Activated T-helper 2 cell treated with anti-CD3 and anti-CD28 coated beads, Interferon-gamma antibody, Interleukin-2, Interleukin-4, amounts not matched to agents 10 μg/mL and 5 μg/mL and 100 μg/mL, durations not matched to agents 14 hours and 24 hours and 36 hours (primary cell): ENCODE measurements at regions of chr11 and their contacts with region 1.

Region 1: DNA sequence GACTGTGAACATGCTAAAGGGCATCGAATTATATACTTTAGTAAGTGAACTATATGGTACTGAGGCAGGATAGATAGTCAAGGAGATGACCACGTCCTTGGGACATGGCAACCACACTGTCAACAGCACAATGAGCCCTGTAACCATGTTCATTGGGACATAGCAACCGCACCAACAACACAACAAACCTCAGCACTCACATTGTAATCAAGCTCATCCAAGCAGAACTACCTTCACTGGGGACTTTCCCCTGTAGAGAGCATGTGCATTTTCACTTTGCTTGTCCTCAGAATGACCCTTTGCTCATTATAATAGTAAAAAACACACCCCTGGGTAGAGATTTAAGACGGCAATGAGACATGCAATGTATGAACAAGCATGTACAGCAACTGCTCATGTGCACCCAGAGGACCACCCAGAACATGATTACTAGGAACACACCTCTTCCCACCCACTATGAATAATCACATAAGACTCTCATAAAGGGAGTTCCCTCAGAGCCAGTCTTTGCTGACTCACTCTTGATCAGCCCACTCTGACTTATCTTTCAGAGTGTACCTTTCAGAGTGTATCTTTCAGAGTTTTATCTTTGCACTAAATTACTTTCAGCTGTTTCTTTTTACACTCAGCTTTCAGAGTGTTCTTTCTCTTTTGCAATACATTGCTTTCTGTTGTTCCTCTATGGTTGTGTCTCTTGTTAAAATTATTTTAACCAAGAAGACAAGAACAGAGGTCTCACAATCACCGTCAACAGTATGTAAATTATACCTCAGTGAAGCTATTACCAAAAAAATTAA is 4.1 kb upstream of the PLAAT2 start:
- DNase-seq: peak; percentile 70
- H3K4me3 Mint-ChIP-seq: no peak overlapping the region
- H3K27ac Mint-ChIP-seq: peak overlapping the region; percentile 94
- H3K4me1 Mint-ChIP-seq: peaks cover 44% of the 10 kb centered on the region
- H3K27me3 Mint-ChIP-seq: peaks cover 21% of the 10 kb centered on the region

Region 2: GRCh38 chr11:63445720-63446119 is 121.5 kb before region 1 on chr11:
- intact Hi-C with region 1: loop called (anchors 1 kb)
- DNase-seq: no peak
- H3K4me3 Mint-ChIP-seq: no peak overlapping the region
- H3K27ac Mint-ChIP-seq: peak overlapping the region; percentile 60
- H3K4me1 Mint-ChIP-seq: peaks cover 41% of the 10 kb centered on the region
- H3K27me3 Mint-ChIP-seq: peaks cover 7% of the 10 kb centered on the region

Region 3: GRCh38 chr11:63490551-63491239 is 76.5 kb before region 1 on chr11 and contains the start of gene PLAAT5:
- intact Hi-C with region 1: loop called (anchors 1 kb)
- DNase-seq: no peak
- H3K4me3 Mint-ChIP-seq: peak within 1 kb of the TSS; percentile 83
- H3K27ac Mint-ChIP-seq: peak within 1 kb of the TSS; percentile 78
- H3K4me1 Mint-ChIP-seq: peaks cover 28% of the 10 kb centered on the region
- H3K27me3 Mint-ChIP-seq: peaks cover 64% of the 10 kb centered on the region
- total RNA-seq, gene PLAAT5: 0.64 and 0.80 TPM in 2 replicates

Region 4: DNA sequence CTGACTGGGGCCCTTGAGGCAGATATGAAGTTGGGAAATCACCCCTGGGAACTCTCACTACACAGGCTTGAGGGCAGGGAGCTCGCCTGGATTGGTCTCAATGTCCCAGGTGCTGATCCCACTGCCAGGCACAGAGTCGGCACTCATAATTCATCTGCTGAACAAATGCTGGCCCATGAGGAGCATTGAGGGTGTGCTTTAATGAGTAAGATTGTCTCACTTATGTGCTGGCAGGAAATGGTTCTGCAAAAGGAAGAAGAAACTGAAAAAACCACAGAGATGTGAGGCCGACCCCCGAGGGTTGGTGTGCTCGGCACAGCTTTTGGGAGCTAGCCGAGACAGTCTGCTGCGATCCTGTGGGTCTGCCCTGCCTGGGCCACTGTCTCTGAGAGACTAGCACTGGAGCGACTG is 13.5 kb before region 1 on chr11:
- intact Hi-C with region 1: loop called (anchors 1 kb)
- DNase-seq: peak; percentile 39
- H3K4me3 Mint-ChIP-seq: peak overlapping the region; percentile 63
- H3K27ac Mint-ChIP-seq: peak overlapping the region; percentile 89
- H3K4me1 Mint-ChIP-seq: peaks cover 44% of the 10 kb centered on the region
- H3K27me3 Mint-ChIP-seq: no peaks in the 10 kb centered on the region

Region 5: DNA sequence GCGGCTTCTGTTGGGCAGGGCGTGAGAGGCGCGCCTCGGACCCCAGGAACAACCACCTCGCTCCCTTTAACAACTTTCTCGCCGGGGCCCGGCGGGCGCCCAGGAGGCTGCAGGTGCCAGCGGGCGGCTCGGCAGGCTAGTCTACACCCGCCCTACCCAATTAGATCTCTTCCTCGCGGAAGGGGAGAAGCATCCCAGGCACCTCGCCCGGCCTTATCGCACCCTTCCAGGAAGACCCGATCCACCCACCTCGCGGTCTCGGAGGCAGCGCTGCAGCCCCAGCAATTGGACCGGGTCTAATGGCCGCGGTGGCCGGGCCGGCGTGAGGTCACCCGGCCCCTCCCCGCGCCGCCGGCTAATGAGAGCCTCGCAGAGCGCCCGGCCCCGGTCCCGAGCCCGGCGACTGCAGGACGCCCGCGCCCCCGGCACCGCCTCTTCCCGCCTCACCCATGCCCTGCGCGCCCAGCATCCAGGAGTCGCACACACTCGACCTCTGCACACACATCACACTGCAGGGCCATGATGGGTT is 47.0 kb after region 1 on chr11 and contains the start of gene PLAAT3:
- intact Hi-C with region 1: loop called (anchors 5 kb)
- DNase-seq: no peak
- H3K4me3 Mint-ChIP-seq: peak within 1 kb of the TSS; percentile 77
- H3K27ac Mint-ChIP-seq: no peak within 1 kb of the TSS
- H3K4me1 Mint-ChIP-seq: peaks cover 9% of the 10 kb centered on the region
- H3K27me3 Mint-ChIP-seq: peaks cover 27% of the 10 kb centered on the region
- total RNA-seq, gene PLAAT3: 15.2 and 17.3 TPM in 2 replicates

Region 6: GRCh38 chr11:63671322-63672155 is 104.3 kb after region 1 on chr11 and contains the start of gene ATL3:
- intact Hi-C with region 1: loop called (anchors 1 kb)
- DNase-seq: peak; percentile 89
- H3K4me3 Mint-ChIP-seq: peak within 1 kb of the TSS; percentile 86
- H3K27ac Mint-ChIP-seq: peak within 1 kb of the TSS; percentile 80
- H3K4me1 Mint-ChIP-seq: peaks cover 27% of the 10 kb centered on the region
- H3K27me3 Mint-ChIP-seq: no peaks in the 10 kb centered on the region
- total RNA-seq, gene ATL3: 38.6 and 38.8 TPM in 2 replicates